Activated CD4-positive, alpha-beta memory T cell treated with anti-CD3 and anti-CD28 coated beads for 36 hours (primary cell): ENCODE measurements at regions of chr7 and their contacts with region 1.

Region 1: GRCh38 chr7:135977007-135977741 is at the start of gene MTPN:
- DNase-seq: peak; percentile 99
- H3K4me3 Mint-ChIP-seq: peak within 1 kb of the TSS; percentile 90
- H3K27ac Mint-ChIP-seq: peak within 1 kb of the TSS; percentile 92
- H3K4me1 Mint-ChIP-seq: peaks cover 73% of the 10 kb centered on the region
- H3K27me3 Mint-ChIP-seq: no peaks in the 10 kb centered on the region
- total RNA-seq, gene MTPN: 138 to 143 TPM

Region 2: DNA sequence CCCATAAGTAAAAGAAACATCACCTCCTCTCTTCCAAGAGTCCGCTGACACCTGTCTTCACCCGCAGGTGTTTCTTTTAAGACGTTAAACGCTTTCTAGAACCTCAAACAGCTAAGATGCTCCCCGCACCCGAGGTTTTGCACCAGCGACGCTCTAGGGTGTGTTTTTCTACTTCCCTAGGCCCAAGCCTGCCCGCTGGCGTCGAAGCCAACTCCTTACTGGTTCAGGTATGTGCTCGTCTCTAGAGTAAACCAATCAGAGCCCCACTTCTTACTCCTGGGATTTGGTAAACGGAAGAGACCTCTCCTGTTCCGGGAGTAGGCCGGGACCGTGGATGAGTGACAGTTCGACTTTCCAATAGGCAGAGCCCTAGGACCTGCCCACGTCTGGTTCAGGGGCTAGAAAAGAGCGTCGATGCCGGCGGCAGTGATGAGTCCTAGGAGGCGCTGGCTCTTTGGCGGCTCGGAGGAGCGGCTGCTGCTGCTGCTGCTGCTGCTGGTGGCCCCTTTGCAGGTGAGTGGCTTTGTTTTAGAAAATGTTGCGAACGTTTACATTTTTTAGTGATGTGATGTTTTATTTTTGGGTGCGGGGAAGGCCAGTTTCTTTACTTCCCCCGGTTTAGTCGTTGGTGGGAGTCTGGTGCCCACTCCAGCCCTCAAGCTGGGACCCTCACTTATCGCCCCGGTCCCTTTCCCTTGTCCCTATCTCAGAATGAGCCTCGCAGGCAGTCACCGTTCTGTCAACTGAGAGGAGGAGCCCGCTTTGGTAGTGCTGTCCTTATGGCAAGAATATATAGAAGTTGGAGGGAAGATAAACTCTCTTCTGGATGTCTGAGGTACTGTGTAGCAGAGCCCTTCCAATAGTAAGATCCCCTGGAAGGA is 1330.5 kb before region 1 on chr7 and contains the start of gene BPGM:
- CTCF ChIA-PET with region 1: no interaction called
- POLR2A ChIA-PET with region 1: no interaction called
- intact Hi-C with region 1: loop called (anchors 2 kb)
- DNase-seq: peak; percentile 98
- H3K4me3 Mint-ChIP-seq: no peak within 1 kb of the TSS
- H3K27ac Mint-ChIP-seq: no peak within 1 kb of the TSS
- H3K4me1 Mint-ChIP-seq: peaks cover 32% of the 10 kb centered on the region
- H3K27me3 Mint-ChIP-seq: no peaks in the 10 kb centered on the region
- total RNA-seq, gene BPGM: 23.7 to 24.9 TPM

Region 3: DNA sequence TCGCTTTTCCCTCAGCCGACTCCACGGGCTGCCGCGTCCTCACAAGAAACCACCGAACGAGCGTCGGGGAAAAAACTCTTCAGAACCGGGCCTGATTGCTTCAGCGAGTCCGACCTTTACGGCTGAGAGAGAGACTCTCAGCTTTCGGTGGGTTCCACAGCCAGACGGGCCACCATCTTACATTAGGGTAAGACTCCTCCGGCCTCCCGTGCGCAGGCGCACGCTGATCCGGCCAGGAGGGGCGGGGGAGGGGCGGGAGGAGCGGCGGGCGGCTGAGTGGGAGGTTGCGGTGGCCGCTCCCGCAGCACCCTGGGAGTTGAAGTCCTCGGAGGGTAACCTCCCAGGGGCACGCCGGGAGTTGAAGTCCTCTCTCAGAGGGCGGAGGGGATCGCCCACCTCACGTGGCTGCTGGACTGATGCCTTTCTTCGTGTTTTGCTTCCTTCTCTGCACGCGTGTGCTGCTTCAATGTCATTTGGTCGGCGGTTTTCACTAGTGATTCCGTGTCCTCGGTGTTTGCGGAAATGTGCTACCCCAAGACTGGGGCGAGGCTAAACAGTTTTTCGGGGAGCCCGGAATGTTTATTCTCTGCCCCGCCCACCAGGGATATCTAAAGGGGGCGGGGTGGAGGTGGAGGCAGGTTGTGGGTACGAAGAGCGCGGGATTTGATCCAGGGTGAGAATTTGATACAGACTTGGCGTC is 467.1 kb before region 1 on chr7 and contains the start of gene CNOT4:
- CTCF ChIA-PET with region 1: no interaction called
- POLR2A ChIA-PET with region 1: no interaction called
- intact Hi-C with region 1: loop called (anchors 1 kb)
- DNase-seq: peak; percentile 98
- H3K4me3 Mint-ChIP-seq: no peak within 1 kb of the TSS
- H3K27ac Mint-ChIP-seq: no peak within 1 kb of the TSS
- H3K4me1 Mint-ChIP-seq: peaks cover 9% of the 10 kb centered on the region
- H3K27me3 Mint-ChIP-seq: no peaks in the 10 kb centered on the region
- total RNA-seq, gene CNOT4: 16.1 to 17.4 TPM

Region 4: GRCh38 chr7:135965602-135966001 is 11.6 kb before region 1 on chr7:
- CTCF ChIA-PET with region 1: no interaction called
- POLR2A ChIA-PET with region 1: interaction called, 3 read pairs
- intact Hi-C with region 1: loop called (anchors 1 kb)
- DNase-seq: no peak
- H3K4me3 Mint-ChIP-seq: no peak overlapping the region
- H3K27ac Mint-ChIP-seq: no peak overlapping the region
- H3K4me1 Mint-ChIP-seq: peaks cover 67% of the 10 kb centered on the region
- H3K27me3 Mint-ChIP-seq: no peaks in the 10 kb centered on the region

Region 5: DNA sequence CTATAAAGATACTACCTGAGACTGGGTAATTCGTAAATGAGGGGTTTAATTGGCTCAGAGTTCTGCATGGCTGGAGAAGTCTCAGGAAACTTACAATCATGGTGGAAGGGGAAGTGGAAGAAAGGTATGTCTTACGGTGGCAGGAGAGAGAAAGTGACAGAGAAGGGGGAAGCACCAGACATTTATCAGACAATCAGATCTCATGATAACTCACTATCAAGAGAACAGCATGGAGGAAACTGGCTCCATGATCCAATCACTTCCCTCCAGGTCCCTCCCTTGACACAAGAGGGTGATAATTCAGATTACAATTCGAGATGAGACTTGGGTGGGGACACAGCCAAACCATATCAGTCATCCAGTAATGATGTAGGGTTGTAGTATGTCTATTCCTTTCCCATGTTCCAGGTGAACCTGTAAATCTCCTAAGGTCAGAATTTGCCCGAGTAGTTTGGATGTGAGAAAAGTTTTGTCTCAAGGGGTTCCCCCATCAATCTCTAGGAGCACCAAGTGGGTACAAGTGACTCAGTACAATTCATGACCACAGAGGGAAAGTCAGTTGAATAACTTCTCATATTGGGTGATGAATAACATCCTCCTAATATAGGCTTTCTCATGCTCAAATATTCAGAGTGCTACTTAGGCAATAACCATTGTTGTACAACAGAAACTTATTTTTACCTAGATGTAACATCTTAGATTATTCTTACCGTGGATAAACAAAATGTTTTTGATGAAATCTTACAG is 39.6 kb after region 1 on chr7:
- CTCF ChIA-PET with region 1: no interaction called
- POLR2A ChIA-PET with region 1: no interaction called
- intact Hi-C with region 1: loop called (anchors 1 kb)
- DNase-seq: no peak
- H3K4me3 Mint-ChIP-seq: no peak overlapping the region
- H3K27ac Mint-ChIP-seq: no peak overlapping the region
- H3K4me1 Mint-ChIP-seq: peaks cover 22% of the 10 kb centered on the region
- H3K27me3 Mint-ChIP-seq: peaks cover 10% of the 10 kb centered on the region

Region 6: GRCh38 chr7:136039577-136040345 is 62.6 kb after region 1 on chr7:
- CTCF ChIA-PET with region 1: no interaction called
- POLR2A ChIA-PET with region 1: no interaction called
- intact Hi-C with region 1: no loop called
- DNase-seq: no peak
- H3K4me3 Mint-ChIP-seq: no peak overlapping the region
- H3K27ac Mint-ChIP-seq: no peak overlapping the region
- H3K4me1 Mint-ChIP-seq: peaks cover 12% of the 10 kb centered on the region
- H3K27me3 Mint-ChIP-seq: no peaks in the 10 kb centered on the region

Region 7: DNA sequence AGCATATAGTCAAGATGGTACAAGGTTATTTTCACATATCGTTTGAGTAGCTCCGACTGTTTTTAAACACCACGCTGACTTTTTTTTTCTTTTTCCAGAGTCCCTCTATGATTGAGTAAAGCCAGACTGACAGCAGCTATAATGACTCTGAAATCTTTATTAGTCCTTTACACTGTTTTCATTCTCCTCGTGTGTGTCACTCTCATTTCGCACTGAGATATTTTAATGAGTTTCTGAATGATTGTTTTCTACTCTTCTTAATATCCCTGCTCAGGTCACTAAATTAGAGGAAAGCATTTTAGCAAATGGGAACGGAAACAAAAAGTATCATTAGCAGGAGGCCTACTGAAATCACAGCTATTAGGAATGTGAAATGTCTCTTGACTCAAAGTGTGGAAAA is 162.2 kb after region 1 on chr7:
- CTCF ChIA-PET with region 1: no interaction called
- POLR2A ChIA-PET with region 1: no interaction called
- intact Hi-C with region 1: loop called (anchors 1 kb)
- DNase-seq: no peak
- H3K4me3 Mint-ChIP-seq: no peak overlapping the region
- H3K27ac Mint-ChIP-seq: no peak overlapping the region
- H3K4me1 Mint-ChIP-seq: peaks cover 4% of the 10 kb centered on the region
- H3K27me3 Mint-ChIP-seq: no peaks in the 10 kb centered on the region